Activated CD4-positive, alpha-beta memory T cell treated with anti-CD3 and anti-CD28 coated beads, Interleukin-2, amount 10 ng/mL, durations not matched to agents 7 days and 5 days (primary cell): ENCODE measurements at regions of chr4 and their contacts with region 1.

Region 1: GRCh38 chr4:86497980-86498862 is 95.9 kb upstream of the PTPN13 start:
- DNase-seq: no peak
- H3K4me3 Mint-ChIP-seq: no peak overlapping the region
- H3K27ac Mint-ChIP-seq: no peak overlapping the region
- H3K4me1 Mint-ChIP-seq: peaks cover 12% of the 10 kb centered on the region
- H3K27me3 Mint-ChIP-seq: peaks cover 16% of the 10 kb centered on the region

Region 2: DNA sequence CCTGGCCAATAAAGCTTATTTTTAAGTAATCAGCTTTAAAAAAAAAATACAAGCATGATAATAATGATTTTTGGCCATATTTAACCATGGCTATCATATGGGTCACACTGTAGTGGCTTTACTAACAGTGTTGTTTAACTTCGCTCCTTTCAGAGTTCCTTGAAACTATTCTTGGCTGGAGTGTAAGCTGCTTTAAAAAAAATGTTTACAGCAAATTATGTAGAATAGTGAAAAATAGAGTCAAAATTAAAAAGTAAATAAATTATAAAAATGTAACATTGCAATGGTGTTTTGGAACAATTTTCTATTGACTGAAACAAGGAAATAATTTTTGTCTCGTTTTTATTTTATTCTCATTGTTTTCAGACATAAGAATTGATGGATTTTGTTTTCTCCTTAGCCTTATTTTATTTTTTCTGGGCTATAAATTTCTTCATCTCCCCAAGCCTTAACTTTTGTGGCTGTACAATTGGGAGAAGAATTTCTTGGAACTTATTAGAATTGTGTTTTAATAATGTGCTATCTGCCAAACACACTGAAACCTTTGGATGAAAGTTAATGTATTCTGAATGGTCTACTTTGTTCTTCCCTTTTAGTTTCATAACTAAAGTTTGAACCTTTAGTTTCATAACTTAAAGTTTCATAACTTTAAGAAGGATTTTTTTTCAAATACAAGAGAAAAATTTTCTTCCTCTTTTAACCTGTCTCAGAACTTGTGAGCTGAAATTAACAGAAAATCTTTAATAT is 841.3 kb before region 1 on chr4:
- CTCF ChIA-PET with region 1: no interaction called
- POLR2A ChIA-PET with region 1: no interaction called
- DNase-seq: no peak
- H3K4me3 Mint-ChIP-seq: no peak overlapping the region
- H3K27ac Mint-ChIP-seq: no peak overlapping the region
- H3K4me1 Mint-ChIP-seq: no peaks in the 10 kb centered on the region
- H3K27me3 Mint-ChIP-seq: no peaks in the 10 kb centered on the region

Region 3: GRCh38 chr4:86512631-86513030 is 14.4 kb after region 1 on chr4:
- CTCF ChIA-PET with region 1: interaction called, 11 read pairs
- POLR2A ChIA-PET with region 1: no interaction called
- DNase-seq: no peak
- H3K4me3 Mint-ChIP-seq: no peak overlapping the region
- H3K27ac Mint-ChIP-seq: no peak overlapping the region
- H3K4me1 Mint-ChIP-seq: peaks cover 3% of the 10 kb centered on the region
- H3K27me3 Mint-ChIP-seq: peaks cover 23% of the 10 kb centered on the region

Region 4: GRCh38 chr4:86522349-86522748 is 24.1 kb after region 1 on chr4:
- CTCF ChIA-PET with region 1: interaction called, 19 read pairs
- POLR2A ChIA-PET with region 1: no interaction called
- DNase-seq: no peak
- H3K4me3 Mint-ChIP-seq: no peak overlapping the region
- H3K27ac Mint-ChIP-seq: no peak overlapping the region
- H3K4me1 Mint-ChIP-seq: peaks cover 7% of the 10 kb centered on the region
- H3K27me3 Mint-ChIP-seq: peaks cover 14% of the 10 kb centered on the region

Region 5: GRCh38 chr4:86593688-86594558 is 95.7 kb after region 1 on chr4 and contains the start of gene PTPN13:
- CTCF ChIA-PET with region 1: interaction called, 22 read pairs
- POLR2A ChIA-PET with region 1: no interaction called
- DNase-seq: peak; percentile 78
- H3K4me3 Mint-ChIP-seq: peak within 1 kb of the TSS; percentile 74
- H3K27ac Mint-ChIP-seq: peak within 1 kb of the TSS; percentile 63
- H3K4me1 Mint-ChIP-seq: peaks cover 20% of the 10 kb centered on the region
- H3K27me3 Mint-ChIP-seq: peaks cover 49% of the 10 kb centered on the region
- total RNA-seq, gene PTPN13: 4.7 to 5.3 TPM

Region 6: DNA sequence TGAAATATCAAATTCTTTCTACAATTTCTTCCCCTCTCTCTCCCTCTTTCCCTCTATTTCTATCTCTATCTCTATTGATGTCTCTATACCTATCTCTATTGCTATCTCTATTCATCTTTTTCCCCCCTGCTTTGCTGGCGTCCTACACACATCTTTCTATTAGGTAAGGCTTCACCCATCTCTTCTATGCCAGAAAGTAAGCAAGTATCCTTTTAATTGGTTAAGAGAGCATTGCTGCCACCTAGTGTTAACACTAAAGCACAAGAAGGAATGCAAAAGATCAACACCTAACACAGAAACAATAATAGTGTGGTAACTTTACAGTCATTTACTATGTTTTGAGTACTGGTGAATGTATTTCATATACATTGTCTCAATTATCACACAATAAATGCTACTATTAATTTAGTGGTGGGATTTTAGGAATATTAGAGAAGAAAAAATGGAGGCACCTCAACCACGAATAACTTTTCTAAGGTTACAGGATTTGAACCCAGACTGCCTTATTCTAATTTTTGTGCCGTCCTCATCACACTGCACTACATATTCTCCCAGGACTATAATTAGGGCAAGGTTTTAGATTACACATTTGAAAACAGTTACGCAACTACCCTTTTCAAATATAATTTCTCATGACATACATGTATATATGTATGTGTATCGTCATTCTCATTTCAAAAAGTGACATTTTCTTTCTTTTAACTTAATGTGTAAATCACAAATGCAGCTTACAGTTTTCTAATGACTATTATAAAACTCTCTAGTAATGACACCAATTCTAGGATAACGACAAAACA is 397.7 kb after region 1 on chr4:
- CTCF ChIA-PET with region 1: interaction called, 68 read pairs
- POLR2A ChIA-PET with region 1: no interaction called
- DNase-seq: no peak
- H3K4me3 Mint-ChIP-seq: no peak overlapping the region
- H3K27ac Mint-ChIP-seq: no peak overlapping the region
- H3K4me1 Mint-ChIP-seq: peaks cover 12% of the 10 kb centered on the region
- H3K27me3 Mint-ChIP-seq: peaks cover 16% of the 10 kb centered on the region